ENCODE measurements at regions of chrX and their contacts with region 1.

Region 1: GRCh38 chrX:41116948-41117347 is 31.7 kb downstream of the USP9X start:
- DNase-seq: no peak
- ATAC-seq: peak; percentile 68
- H3K4me3 ChIP-seq: no peak overlapping the region
- H3K4me1 ChIP-seq: peaks cover 3% of the 10 kb centered on the region
- CTCF ChIP-seq: no peak

Region 2: DNA sequence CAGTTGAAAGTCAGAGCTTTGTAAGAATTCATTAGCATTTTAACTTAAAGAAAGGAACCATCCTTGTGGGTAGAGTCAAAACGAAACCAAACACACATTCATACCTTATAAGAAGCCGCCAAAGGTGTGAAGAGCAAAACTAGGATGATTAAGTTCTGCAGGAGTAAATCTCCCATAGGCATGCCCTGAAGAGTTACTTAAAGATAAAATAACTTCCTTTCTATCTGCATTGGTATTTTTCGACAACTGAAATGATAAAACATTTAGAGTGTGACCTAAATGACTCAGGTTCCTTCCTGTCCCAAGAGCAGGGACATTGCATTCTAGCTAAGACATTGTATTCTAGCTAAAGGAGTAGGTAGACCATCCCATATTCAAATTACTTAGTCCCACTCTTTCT is 1094.5 kb before region 1 on chrX:
- intact Hi-C with region 1: no loop called
- DNase-seq: no peak
- ATAC-seq: no peak
- H3K4me3 ChIP-seq: no peak overlapping the region
- H3K4me1 ChIP-seq: no peaks in the 10 kb centered on the region
- CTCF ChIP-seq: no peak

Region 3: DNA sequence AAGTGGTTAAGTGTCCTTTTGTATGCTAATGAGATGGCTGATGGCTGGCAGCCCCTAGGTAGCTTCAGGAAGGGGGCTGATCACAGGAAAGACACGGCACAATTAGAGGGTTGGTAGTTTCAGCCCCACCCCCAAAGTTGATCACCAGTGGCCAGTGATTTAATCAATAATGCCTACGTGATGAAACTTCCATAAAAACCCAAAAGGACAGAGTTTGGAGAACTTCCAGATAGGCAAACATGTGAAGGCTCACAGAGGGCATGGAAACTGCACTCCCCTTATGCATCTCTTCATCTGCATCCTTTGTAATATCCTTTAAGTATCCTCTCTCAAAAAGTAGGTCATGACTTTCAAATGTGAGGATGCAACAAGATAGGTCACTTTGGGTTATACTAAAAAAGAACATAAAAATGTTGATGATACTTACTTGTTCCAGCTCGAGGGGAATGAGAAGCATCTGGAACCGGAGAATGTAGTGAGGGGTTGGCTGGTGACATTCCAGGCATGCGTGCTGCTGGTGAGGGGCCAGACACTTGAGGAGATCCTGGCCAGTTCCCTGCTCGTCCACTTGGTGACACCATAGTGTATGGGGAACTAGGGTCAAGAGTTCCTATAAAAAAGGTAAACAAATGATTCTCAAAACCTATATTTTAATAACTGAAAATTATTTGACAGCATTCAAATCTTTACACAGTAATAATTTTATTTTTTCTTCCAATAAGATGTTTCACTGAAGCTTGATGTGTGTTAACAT is 452.9 kb before region 1 on chrX:
- intact Hi-C with region 1: loop called in 1 of 2 experiments (anchors 10 kb)
- DNase-seq: no peak
- ATAC-seq: no peak
- H3K4me3 ChIP-seq: no peak overlapping the region
- H3K4me1 ChIP-seq: no peaks in the 10 kb centered on the region
- CTCF ChIP-seq: no peak

Region 4: GRCh38 chrX:40877887-40878286 is 239.1 kb before region 1 on chrX:
- intact Hi-C with region 1: loop called in 1 of 2 experiments (anchors 10 kb)
- DNase-seq: peak in 1 of 3 donors; percentile 31
- ATAC-seq: no peak
- H3K4me3 ChIP-seq: no peak overlapping the region
- H3K4me1 ChIP-seq: no peaks in the 10 kb centered on the region
- CTCF ChIP-seq: no peak